ENCODE measurements at regions of chr4 and their contacts with region 1.

Region 1: DNA sequence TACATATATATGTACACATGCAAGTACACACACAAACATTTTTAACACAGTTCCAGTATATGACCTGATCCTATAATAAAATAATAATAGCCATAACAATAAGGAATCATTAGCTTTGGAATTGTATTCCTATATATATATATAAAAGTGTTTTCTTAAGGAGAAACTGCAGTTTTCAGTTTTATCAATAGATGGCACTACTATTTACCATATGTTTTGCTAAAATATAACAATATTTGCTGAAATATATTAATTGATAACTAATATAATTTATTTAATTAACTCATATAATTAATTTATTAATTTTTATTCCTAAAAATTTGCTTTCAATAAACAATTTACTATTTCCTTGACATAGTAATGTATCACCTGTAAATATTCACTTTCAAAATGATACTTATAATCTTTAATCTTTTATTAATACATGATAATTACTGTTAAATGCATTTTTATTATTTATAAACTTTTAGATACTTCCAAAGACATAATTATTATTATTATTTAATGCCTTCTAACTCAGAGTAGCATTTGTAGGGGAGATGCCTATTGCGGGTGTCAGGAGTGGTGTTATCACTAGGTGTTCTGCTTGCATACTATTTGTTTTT is 599.5 kb downstream of the FSTL5 start:
- DNase-seq: peak; percentile 43
- ATAC-seq: no peak
- H3K4me3 ChIP-seq: no peak overlapping the region
- H3K27ac ChIP-seq: no peak overlapping the region
- H3K4me1 ChIP-seq: no peaks in the 10 kb centered on the region
- H3K27me3 ChIP-seq: no peaks in the 10 kb centered on the region
- CTCF ChIP-seq: peak; percentile 31; the same call in 1 of the 2 replicates

Region 2: GRCh38 chr4:161252520-161253141 is 311.7 kb before region 1 on chr4:
- CTCF ChIA-PET with region 1: no interaction called
- POLR2A ChIA-PET with region 1: no interaction called
- intact Hi-C with region 1: loop called (anchors 10 kb)
- DNase-seq: peak; percentile 60
- ATAC-seq: peak; percentile 42
- H3K4me3 ChIP-seq: no peak overlapping the region
- H3K27ac ChIP-seq: no peak overlapping the region
- H3K4me1 ChIP-seq: no peaks in the 10 kb centered on the region; the same call in 1 of the 2 replicates
- H3K27me3 ChIP-seq: no peaks in the 10 kb centered on the region
- CTCF ChIP-seq: peak; percentile 80

Region 3: GRCh38 chr4:161604516-161605300 is 40.4 kb after region 1 on chr4:
- CTCF ChIA-PET with region 1: no interaction called
- POLR2A ChIA-PET with region 1: no interaction called
- intact Hi-C with region 1: no loop called
- DNase-seq: no peak
- ATAC-seq: no peak
- H3K4me3 ChIP-seq: no peak overlapping the region
- H3K27ac ChIP-seq: no peak overlapping the region
- H3K4me1 ChIP-seq: no peaks in the 10 kb centered on the region
- H3K27me3 ChIP-seq: no peaks in the 10 kb centered on the region
- CTCF ChIP-seq: no peak

Region 4: DNA sequence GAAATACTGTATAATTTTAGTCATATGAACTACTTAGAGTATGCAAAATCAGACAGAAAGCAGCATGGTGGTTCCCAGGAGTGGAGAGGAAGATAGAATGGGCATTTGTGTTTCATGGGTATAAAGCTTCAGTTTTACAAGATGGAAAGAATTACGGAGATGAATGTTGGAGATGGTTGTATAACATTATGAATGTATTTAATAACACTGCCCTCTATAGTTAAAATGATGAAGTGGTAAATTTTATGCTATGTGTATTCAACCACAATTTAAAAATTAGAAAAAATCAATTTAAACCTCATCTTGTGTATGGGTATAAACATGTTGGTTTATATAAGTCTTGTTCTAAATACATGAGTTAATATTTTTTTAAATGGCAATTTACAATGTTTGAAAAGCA is 78.4 kb after region 1 on chr4:
- CTCF ChIA-PET with region 1: no interaction called
- POLR2A ChIA-PET with region 1: no interaction called
- intact Hi-C with region 1: loop called (anchors 2 kb)
- DNase-seq: peak; percentile 36
- ATAC-seq: peak; percentile 45
- H3K4me3 ChIP-seq: no peak overlapping the region
- H3K27ac ChIP-seq: no peak overlapping the region
- H3K4me1 ChIP-seq: no peaks in the 10 kb centered on the region
- H3K27me3 ChIP-seq: no peaks in the 10 kb centered on the region
- CTCF ChIP-seq: peak; percentile 51

Region 5: GRCh38 chr4:161714022-161714751 is 149.9 kb after region 1 on chr4:
- CTCF ChIA-PET with region 1: no interaction called
- POLR2A ChIA-PET with region 1: no interaction called
- intact Hi-C with region 1: loop called (anchors 5 kb)
- DNase-seq: peak; percentile 77
- ATAC-seq: peak; percentile 90
- H3K4me3 ChIP-seq: no peak overlapping the region
- H3K27ac ChIP-seq: peak overlapping the region; percentile 72
- H3K4me1 ChIP-seq: peaks cover 23% of the 10 kb centered on the region
- H3K27me3 ChIP-seq: no peaks in the 10 kb centered on the region
- CTCF ChIP-seq: no peak

Region 6: DNA sequence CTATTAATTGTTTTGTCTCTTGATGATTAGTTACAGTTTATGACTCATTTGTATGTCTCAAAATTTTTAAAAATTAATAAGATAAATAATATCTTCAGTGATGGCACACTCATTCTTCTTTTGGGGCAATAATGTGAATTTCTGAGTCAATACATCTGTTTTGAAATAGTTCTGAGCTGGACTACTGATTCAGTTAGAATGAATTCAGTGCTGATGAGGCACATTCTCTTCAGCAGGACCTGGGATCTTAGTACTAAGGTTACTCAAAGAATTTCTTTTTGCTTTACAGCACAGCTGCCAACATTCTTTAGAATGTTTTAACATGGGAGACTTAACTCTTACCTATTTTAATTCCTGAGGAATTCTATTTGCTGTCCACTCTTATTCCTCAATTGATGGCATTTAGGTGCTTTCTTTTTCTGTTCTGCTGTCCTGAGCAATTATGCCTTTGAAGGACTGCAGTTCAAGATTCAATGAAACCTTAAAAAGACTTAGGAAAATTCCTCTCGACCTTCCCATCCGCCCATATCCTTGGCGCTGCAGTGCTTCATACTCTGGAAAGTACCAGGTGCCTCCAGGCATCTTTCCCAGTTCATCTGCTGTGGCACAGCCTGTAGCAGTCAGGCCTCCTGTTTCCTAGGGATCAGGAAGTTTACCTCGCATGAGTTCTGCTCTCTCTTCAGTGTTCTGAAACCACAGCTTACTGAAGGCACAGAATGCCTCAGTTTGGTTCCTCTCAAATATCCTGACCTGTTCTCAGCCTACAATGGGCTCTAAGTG is 385.8 kb after region 1 on chr4:
- CTCF ChIA-PET with region 1: no interaction called
- POLR2A ChIA-PET with region 1: no interaction called
- intact Hi-C with region 1: loop called (anchors 2 kb)
- DNase-seq: no peak
- ATAC-seq: no peak
- H3K4me3 ChIP-seq: no peak overlapping the region
- H3K27ac ChIP-seq: no peak overlapping the region
- H3K4me1 ChIP-seq: no peaks in the 10 kb centered on the region
- H3K27me3 ChIP-seq: no peaks in the 10 kb centered on the region
- CTCF ChIP-seq: no peak

Region 7: DNA sequence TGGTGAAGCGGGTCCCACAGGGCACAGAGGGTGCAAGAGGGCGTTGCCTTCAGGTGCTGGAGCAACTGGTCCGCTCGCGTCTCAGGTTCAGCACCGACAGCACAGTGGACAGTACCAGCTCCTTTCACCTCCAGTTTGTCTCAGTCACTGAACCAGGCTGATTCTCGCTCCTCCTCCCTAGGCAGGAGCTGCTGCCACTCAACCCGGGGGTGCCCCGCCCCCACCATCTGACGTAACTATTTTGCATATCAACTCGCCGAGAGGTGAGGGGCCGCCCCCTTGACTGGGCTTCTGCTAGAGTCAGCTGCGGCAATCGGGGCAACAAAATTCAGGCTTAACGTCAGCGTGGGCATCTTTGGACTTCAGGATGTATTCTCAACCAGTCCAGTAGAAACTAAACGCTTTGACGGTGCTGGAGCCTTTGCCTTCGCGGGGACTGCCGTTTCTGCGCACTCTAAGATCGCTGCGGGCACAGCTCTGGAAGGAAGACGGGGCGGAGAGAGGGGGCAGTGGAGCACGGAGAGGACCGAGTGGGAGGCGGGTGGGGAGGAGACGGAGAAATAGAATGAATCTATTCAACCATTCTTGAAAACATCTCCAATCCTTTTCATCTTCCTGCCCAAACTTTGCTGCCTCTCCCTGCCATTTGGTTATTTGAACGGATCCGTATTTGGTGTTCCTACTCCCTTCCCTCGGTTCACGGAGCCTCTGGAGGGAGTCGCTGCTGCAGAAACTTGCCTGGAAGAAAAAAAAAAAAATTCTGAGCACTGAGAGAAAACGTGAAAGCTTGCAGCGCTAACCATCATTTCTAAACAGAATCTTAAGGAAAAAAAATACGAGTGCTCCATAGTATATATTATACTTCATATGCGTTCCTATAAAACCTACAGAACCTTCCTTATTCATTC is 599.8 kb after region 1 on chr4 and contains the start of gene FSTL5:
- CTCF ChIA-PET with region 1: no interaction called
- POLR2A ChIA-PET with region 1: no interaction called
- intact Hi-C with region 1: loop called (anchors 10 kb)
- DNase-seq: peak; percentile 53
- ATAC-seq: peak; percentile 86
- H3K4me3 ChIP-seq: peak within 1 kb of the TSS; percentile 63
- H3K27ac ChIP-seq: no peak within 1 kb of the TSS
- H3K4me1 ChIP-seq: 0 out of 2 replicates have a peak, but pooled peaks cover 6% of the 10 kb centered on the region
- H3K27me3 ChIP-seq: no peaks in the 10 kb centered on the region
- CTCF ChIP-seq: no peak
- total RNA-seq, gene FSTL5: not detected in 2 replicates

Region 8: DNA sequence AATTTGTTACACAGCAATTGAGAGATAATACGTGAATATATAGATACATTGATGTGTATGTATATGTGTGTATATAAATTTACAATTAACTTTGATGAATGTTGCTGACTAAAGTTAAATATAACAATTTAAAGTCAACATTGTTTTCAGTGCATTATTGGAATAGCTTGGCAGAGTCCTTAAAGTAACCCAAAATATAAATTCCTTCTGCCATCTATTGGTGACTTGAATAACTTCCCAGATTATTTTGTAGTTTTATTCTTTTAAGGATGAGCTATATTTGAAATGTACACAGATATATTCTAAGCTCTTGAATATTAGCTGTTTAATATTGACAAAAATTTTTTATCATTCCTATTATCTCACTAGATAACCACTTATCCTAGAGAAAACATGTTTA is 897.6 kb after region 1 on chr4:
- CTCF ChIA-PET with region 1: no interaction called
- POLR2A ChIA-PET with region 1: no interaction called
- intact Hi-C with region 1: loop called (anchors 5 kb)
- DNase-seq: peak; percentile 25
- ATAC-seq: peak; percentile 66
- H3K4me3 ChIP-seq: no peak overlapping the region
- H3K27ac ChIP-seq: no peak overlapping the region
- H3K4me1 ChIP-seq: no peaks in the 10 kb centered on the region
- H3K27me3 ChIP-seq: no peaks in the 10 kb centered on the region
- CTCF ChIP-seq: peak; percentile 50

Measured in PC-3 (cell line).